HEK293T (cell line): ENCODE measurements at regions of chr9 and their contacts with region 1.

Region 1: GRCh38 chr9:137188490-137189296 is at the starts of genes ANAPC2 and SSNA1:
- DNase-seq: peak; percentile 95

Region 2: GRCh38 chr9:137129456-137130175 is 59.1 kb before region 1 on chr9:
- CTCF ChIA-PET with region 1: interaction called, 3 read pairs
- POLR2A ChIA-PET with region 1: interaction called, 19 read pairs
- DNase-seq: peak; percentile 94

Region 3: GRCh38 chr9:137150617-137151457 is 37.9 kb before region 1 on chr9:
- CTCF ChIA-PET with region 1: no interaction called
- POLR2A ChIA-PET with region 1: interaction called, 19 read pairs
- DNase-seq: peak; percentile 83

Region 4: GRCh38 chr9:137162505-137163100 is 26.1 kb before region 1 on chr9:
- CTCF ChIA-PET with region 1: no interaction called
- POLR2A ChIA-PET with region 1: no interaction called
- DNase-seq: no peak

Region 5: DNA sequence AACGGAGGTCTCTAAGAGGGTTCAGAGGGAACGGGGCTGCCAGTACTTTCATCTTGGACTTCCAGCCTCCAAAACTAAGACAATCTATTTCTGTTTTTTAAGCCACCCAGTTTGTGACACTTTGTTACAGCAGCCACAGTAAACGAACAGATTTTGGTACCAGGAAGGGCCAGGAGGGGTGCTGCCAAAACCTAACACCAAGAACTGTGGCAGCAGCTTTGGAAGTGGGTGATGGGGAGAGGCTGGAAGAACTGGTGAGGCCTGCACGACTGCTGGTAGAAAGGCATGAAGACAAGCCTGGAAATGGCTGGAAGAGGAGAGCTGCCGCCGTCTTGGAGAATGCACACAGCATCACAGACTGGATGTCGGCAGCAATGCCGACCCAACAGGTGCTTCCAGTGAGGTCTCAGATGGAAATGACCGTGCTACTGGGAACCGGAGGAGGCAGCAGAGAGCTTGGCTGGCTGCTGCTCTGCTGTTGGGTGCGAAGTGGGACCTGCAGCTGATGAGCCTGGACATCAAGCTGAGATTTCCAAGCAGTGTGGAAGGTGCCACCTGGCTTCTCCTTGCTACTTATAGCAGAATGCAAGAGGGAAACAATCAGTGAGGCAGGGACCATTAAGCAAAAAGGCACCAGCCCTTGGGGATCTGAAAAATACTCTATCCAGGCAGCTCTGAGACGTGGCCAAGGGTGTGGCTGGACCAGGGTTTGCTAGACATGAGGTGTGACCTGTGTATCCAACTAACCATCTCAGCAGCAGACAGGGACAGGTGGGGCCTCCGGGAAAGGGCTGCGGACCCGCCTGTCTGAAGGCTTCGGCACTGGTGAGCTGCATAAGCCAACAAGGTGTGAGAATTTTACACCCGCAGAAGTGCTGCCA is 12.2 kb before region 1 on chr9:
- CTCF ChIA-PET with region 1: no interaction called
- POLR2A ChIA-PET with region 1: interaction called, 11 read pairs
- DNase-seq: peak; percentile 64

Region 6: GRCh38 chr9:137200311-137201204 is 11.9 kb after region 1 on chr9 and contains the start of gene TPRN:
- CTCF ChIA-PET with region 1: no interaction called
- POLR2A ChIA-PET with region 1: interaction called, 19 read pairs
- DNase-seq: peak; percentile 99

Region 7: GRCh38 chr9:137223078-137223970 is 34.6 kb after region 1 on chr9:
- CTCF ChIA-PET with region 1: no interaction called
- POLR2A ChIA-PET with region 1: interaction called, 14 read pairs
- DNase-seq: peak; percentile 95